HEK293 (cell line): ENCODE measurements at regions of chr14 and their contacts with region 1.

Region 1: DNA sequence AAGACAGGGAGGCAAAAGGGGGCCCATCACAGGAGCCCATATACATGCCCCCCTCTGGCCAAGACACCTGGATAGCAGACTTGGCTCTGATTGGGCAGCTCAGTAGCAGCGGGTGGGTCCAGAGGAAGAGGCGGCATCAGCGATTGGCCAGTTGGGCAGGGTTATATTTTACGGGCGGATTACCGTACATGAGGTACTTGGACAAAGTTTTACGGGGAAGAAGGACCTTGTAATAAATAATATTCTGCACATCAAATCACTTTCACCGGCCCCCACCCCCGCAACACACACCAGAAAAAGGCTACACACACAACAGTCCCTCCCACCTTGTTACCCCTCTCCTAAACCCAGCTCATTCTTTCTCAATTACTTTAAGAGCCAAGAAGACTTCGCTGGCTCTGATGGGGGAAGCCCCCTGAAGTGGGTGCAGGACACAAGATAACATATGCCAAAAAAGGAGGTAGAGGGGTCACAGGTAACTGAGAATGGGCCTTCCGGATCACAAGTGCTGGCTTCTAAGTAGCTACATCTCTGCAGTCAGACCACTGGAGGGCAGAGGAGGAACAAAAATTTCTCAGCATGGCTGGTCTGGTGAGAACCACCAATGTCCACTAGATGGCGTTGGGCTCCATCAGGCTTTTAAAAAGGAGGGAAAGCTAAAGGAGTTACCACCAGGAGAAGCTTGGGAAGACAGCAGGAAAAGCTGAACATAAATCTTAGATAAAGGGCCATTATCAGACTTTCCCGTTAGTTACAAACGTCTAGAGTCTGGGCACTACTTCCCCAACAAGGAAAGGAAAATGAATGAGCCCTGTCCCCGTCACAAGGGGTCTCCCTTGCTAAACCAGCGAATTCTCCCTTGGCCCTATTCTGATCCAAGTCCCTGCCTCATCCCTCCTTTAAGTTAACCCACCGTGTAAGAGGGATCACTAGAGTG is 11.4 kb upstream of the CDH24 start:
- H3K4me3 ChIP-seq: 0 out of 2 replicates have a peak overlapping the region, but pooled peaks have one; percentile 5
- H3K27ac ChIP-seq: peak overlapping the region; percentile 66
- H3K4me1 ChIP-seq: peaks cover 16% of the 10 kb centered on the region
- CTCF ChIP-seq: peak; percentile 95

Region 2: DNA sequence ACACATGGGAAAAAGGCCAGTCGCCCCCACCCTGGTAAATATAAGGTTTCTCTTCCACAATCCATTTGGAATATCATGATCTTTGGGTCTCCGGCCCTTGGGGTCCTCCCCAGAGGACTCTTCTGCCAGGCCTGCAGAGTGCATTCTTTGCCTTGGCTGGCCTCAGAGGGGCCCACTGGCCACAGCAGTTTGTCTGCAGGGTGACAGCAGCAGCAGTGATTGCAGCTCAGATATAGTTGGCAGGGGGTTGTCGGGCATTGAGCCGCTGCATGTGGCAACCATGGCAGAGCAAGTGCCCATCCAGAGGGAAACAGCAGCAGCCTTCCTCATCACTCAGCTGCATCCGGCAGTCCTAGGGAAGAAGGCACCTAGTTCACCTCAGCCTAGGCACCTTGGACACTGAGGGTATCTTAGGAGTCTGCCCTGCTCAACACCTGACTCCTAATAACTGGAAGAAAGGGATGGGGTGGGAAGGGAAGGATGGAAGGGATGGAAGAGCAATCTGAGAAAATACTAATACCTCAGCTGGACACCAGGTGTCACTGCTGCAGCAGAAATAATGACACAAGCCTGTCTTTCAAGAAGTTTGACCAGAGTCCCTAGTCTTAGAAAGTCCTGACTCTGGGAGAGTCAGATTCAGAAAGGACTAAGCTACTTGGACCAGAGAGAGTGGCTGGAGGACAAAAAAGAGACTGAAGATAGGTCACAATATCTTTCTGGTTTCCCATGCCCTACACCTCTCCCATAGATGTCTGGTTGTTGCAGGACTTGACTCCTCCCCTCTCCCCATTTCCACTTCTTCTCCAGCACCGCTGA is 95.3 kb before region 1 on chr14:
- CTCF ChIA-PET with region 1: interaction called, 18 read pairs
- POLR2A ChIA-PET with region 1: interaction called, 9 read pairs
- H3K4me3 ChIP-seq: no peak overlapping the region
- H3K27ac ChIP-seq: no peak overlapping the region
- H3K4me1 ChIP-seq: peaks cover 20% of the 10 kb centered on the region
- CTCF ChIP-seq: peak; percentile 63

Region 3: DNA sequence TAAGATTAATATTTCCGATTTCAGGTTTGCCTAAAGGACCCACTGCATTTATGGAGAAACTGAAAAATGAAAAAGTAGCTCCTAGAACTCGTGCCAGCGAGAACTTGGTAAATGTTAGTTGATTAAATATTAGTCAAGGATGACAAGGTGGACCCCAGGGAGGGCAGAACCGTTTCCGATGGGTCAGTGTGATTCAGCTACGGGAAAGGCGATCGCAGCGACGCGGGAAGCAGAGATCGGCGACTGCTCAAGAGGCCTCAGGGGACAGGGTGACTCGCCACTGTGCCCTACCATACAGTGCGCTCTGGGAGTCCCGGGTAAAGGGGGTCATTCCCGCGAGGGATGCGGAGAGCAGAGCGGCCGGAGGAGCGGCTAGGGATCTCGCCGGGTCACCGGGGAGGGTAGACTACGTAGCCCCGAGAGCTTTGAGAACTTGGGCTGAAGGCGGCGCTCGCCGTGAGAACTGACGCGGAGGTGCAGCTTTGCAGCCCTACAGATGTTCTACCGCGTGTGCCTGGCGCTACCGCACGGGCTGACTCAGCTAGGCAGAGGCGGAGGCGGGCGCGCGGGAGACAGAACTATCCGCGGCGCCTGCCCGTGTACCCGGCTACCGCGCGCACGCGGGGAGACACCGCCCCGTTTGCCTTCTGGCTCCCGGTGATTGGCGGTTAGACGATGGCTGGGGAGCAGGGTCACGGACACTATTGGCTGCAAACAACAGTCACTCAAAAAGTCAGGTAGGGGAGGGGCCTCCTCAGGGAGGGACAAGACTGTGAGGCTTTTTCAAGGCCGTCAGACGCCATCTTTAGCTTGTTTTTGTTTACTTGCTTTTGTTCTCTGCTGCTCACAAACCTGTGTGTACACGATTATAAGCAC is 62.0 kb before region 1 on chr14:
- CTCF ChIA-PET with region 1: interaction called, 11 read pairs
- POLR2A ChIA-PET with region 1: interaction called, 9 read pairs
- H3K4me3 ChIP-seq: peak overlapping the region; percentile 52
- H3K27ac ChIP-seq: peak overlapping the region; percentile 91
- H3K4me1 ChIP-seq: peaks cover 8% of the 10 kb centered on the region; the same call in 1 of the 2 replicates
- CTCF ChIP-seq: peak; percentile 85

Region 4: DNA sequence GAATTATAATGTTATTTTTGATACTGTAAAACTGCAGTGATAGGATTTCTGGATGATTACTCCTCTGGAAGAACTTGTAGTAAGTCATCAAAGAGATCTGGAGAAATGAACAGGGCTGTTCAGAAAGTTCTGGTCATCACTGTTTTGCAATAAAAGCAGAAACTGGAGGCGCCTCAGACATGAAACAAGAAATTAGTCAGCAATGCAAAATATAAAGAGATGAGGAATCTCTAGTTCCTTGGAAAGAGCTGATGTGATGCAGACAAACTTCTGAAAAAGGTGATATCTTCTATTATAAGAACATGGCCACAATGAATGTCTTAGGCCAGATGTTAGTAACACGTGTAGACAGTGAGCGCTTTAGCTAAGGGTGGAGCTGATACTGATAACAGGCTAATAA is 16.7 kb after region 1 on chr14:
- CTCF ChIA-PET with region 1: interaction called, 49 read pairs
- POLR2A ChIA-PET with region 1: interaction called, 7 read pairs
- H3K4me3 ChIP-seq: no peak overlapping the region
- H3K27ac ChIP-seq: no peak overlapping the region
- H3K4me1 ChIP-seq: no peaks in the 10 kb centered on the region
- CTCF ChIP-seq: no peak

Region 5: DNA sequence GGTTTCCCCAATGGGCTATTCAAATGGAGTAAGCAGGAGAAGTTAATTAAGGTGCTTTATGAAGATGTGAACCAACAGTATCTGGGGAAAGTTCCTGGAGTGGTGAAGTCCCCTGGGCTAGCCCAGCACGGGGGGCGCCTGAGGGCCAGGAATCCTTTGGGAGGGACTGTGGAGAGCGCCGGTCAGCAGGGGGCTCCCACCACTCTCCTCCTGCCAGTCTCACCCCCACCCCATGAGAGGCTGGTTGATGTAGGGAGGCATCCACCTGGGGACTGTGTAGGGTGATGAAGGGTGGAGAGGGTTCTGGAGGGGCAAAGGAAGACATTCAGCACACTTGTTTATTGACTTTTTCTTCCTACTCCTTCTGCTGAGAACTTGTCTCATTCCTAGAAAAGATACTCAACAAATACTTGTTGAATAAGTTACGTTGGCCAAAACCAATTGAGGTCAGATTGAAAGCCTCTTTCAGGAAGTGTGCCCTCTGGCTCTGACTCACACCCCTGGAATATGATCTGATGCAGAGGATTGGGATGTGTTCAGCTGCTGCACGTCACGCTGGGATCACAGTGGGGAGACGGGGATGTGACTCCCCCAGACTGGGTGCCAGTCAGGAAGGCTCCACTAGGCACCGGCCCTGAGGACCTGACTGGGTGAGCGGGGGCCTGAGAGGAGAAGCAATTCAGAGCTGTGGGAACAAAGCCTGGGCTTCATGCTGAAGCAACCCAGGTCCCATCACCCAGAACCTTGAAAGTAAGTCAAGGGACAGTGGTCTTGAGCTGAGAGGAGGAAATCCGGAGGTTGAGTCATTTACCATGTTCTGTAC is 46.1 kb after region 1 on chr14:
- CTCF ChIA-PET with region 1: interaction called, 16 read pairs
- POLR2A ChIA-PET with region 1: no interaction called
- H3K4me3 ChIP-seq: no peak overlapping the region
- H3K27ac ChIP-seq: no peak overlapping the region
- H3K4me1 ChIP-seq: no peaks in the 10 kb centered on the region; the same call in 1 of the 2 replicates
- CTCF ChIP-seq: peak; percentile 43

Region 6: DNA sequence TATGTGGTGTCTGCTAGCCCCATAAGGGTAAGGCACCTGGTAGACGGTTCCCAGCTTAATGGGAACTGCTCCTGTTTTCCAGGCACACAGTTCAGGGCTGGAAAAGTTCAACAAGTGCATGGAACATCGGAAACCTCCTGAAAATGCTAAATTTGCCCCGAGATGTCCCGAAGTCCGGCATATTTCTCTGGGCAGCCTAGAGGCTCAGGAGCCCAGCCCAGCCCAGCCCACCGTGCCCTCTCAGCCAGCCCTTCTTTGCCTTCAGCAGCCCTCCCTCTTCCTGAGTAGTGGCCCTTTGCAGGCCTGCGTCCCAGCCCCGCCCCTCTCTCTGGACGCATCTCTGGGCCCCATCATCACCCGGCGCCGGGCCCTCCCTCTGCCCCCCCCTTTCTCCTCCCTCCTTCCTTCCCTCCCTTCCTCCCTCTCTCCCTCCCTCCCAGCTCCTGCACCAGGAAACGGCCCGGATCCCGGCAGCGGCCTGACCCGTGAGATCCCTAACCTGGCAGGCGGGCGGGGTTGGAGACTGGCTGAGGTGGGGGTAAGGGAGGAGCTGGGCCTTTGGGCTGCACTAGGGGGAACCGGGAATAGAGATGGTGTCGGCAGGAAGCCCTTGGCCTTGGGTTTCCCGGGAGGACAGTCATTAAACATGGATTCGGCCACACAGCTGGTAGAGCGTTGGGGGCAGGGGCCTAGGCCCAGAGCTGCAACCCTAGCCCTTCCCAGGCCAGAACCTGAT is 237.8 kb after region 1 on chr14 and contains the start of gene BCL2L2:
- CTCF ChIA-PET with region 1: no interaction called
- POLR2A ChIA-PET with region 1: no interaction called
- H3K4me3 ChIP-seq: peak within 1 kb of the TSS; percentile 56
- H3K27ac ChIP-seq: peak within 1 kb of the TSS; percentile 85
- H3K4me1 ChIP-seq: peaks cover 6% of the 10 kb centered on the region; the same call in 1 of the 2 replicates
- CTCF ChIP-seq: no peak